ENCODE measurements at regions of chr2 and their contacts with region 1.

Region 1: DNA sequence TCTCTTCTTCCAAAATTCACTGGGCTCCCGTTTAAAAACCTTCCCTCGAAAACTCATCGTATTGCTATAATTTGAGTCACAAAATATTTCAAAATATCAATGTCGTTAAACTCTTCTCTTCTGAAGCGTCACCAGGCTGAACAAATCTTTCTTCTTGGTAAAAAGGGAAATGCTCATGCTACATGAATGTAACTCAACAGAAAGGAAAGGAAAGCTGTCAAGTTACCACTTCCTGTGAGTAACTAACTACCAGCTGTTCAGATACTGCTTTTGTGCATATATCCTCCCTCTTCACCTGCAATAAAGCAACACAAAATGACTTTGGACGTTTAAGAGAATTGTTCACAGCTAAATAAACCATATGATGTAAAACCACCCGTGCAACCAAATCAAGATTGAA is 95.4 kb downstream of the DOCK10 start:
- DNase-seq: no peak
- ATAC-seq: peak; percentile 62
- H3K4me3 Mint-ChIP-seq: peak overlapping the region; percentile 96
- H3K27ac Mint-ChIP-seq: peak overlapping the region; percentile 98
- H3K4me1 Mint-ChIP-seq: peaks cover 49% of the 10 kb centered on the region
- H3K27me3 Mint-ChIP-seq: no peaks in the 10 kb centered on the region

Region 2: GRCh38 chr2:224922142-224922727 is 24.7 kb before region 1 on chr2:
- POLR2A ChIA-PET with region 1: interaction called, 172 read pairs
- DNase-seq: no peak
- ATAC-seq: peak; percentile 40
- H3K4me3 Mint-ChIP-seq: peak overlapping the region; percentile 60
- H3K27ac Mint-ChIP-seq: peak overlapping the region; percentile 83
- H3K4me1 Mint-ChIP-seq: peaks cover 50% of the 10 kb centered on the region
- H3K27me3 Mint-ChIP-seq: no peaks in the 10 kb centered on the region

Region 3: DNA sequence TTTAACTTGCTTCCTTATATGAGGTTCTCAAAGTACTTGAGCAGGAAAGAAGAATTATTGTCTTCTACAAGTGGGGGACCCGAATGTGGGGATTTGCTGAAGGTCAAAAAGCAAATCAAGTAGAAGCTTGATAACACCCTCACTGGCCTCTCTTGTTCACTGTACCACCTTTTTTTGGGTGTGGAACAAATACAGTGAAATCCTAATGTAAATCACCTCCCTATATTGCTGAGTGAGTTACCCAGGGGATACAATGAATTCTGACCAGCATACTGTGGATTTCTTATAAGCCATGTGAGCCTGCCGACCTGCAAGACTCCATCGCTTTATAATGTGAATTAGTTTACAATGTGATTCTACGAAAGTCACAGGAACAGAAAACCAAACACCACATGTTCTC is 28.9 kb after region 1 on chr2:
- POLR2A ChIA-PET with region 1: no interaction called
- DNase-seq: no peak
- ATAC-seq: no peak
- H3K4me3 Mint-ChIP-seq: no peak overlapping the region
- H3K27ac Mint-ChIP-seq: no peak overlapping the region
- H3K4me1 Mint-ChIP-seq: peaks cover 55% of the 10 kb centered on the region
- H3K27me3 Mint-ChIP-seq: no peaks in the 10 kb centered on the region

Region 4: GRCh38 chr2:225137971-225138370 is 191.1 kb after region 1 on chr2:
- POLR2A ChIA-PET with region 1: no interaction called
- DNase-seq: no peak
- ATAC-seq: no peak
- H3K4me3 Mint-ChIP-seq: no peak overlapping the region
- H3K27ac Mint-ChIP-seq: no peak overlapping the region
- H3K4me1 Mint-ChIP-seq: no peaks in the 10 kb centered on the region
- H3K27me3 Mint-ChIP-seq: no peaks in the 10 kb centered on the region